Ascending aorta (tissue), 2 donors: ENCODE measurements at regions of chr1 and their contacts with region 1.

Region 1: DNA sequence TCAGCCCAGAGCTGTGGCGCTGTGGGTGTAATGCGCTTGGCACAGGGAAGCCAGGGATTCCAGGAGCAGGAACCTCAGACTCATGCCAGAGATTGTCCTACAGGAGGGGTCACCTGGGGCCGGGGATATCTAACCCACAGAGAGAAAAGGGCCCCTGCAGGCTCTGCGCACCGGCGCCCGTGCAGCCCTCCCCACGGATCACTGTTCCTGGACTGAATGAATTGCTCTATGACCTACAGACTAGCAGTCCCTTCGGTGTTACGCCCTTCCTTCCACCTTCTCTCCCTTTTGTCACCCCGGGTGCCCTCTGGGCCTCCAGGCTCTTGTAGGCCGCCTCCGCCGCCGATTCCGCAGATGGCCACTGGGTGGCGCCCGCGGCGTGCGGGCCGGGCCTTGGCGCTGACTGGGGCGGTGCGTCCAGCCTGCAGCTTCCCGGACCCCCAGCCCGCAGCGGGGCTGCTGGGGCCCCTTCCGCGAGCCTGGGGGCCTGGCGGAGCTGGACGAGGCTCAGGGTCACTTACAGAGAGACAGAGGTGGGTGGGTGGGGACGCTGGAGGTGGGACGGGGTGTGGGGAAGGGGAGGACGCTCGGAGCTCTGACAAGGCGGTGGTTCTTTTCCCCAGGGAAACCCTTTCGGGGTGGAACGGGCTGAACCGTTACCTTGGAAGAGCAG is 101.3 kb downstream of the IER5 start:
- DNase-seq: peak in 1 of 2 donors; percentile 65
- H3K4me3 ChIP-seq: peak overlapping the region; percentile 30 to 39
- H3K27ac ChIP-seq: no peak overlapping the region
- H3K4me1 ChIP-seq: peaks cover 3 to 4% of the 10 kb centered on the region in 2 donors
- H3K27me3 ChIP-seq: no peaks in the 10 kb centered on the region
- CTCF ChIP-seq: peak; percentile 64 to 93 (median 77)

Region 2: GRCh38 chr1:181424786-181425403 is 235.1 kb after region 1 on chr1:
- intact Hi-C with region 1: loop called (anchors 5 kb)
- DNase-seq: peak in 1 of 2 donors; percentile 74
- H3K4me3 ChIP-seq: no peak overlapping the region
- H3K27ac ChIP-seq: no peak overlapping the region
- H3K4me1 ChIP-seq: no peaks in the 10 kb centered on the region
- H3K27me3 ChIP-seq: no peaks in the 10 kb centered on the region
- CTCF ChIP-seq: peak; percentile 50 to 85 (median 64)

Region 3: DNA sequence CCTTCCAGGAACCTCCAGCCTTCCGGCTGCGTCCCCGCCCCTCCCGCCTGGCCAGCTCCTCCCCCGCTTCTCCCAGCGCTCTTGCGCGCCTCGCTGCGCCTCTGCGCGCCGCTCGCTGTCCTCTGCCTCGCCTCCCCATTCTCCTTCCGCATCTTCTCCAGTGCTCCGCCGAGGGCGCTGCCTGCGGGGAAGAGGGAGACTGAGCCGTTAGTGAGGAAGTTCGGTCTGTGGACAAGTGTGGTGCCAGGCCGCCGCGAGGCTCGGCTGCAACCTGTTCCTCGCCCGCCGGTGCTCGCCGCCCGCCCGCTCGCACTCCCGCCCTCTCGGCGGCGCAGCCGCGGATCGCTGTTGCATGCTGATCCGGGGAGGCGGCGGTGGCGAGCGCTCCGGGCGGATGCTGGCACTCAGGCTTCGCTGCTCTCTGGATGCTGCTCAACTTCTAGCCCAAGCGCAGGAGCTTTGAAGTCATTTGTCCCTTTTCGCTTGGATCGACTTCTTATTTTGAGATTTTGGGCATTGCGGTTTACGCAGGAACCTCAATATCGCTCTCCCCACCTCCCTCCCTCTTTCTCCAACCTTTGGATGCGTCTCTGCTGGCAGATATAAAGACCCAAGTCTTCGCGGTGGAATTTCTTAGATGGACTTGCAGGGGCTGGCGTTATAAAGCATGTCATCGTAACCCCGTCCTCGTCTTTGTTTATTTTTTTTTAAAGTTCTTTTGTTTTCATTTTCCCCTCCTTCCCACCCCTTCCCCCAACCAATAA is 292.9 kb after region 1 on chr1:
- intact Hi-C with region 1: no loop called
- DNase-seq: no peak
- H3K4me3 ChIP-seq: peak overlapping the region in 1 of 2 donors; percentile 39
- H3K27ac ChIP-seq: no peak overlapping the region
- H3K4me1 ChIP-seq: no peaks in the 10 kb centered on the region
- H3K27me3 ChIP-seq: peaks cover 13% of the 10 kb centered on the region
- CTCF ChIP-seq: no peak